Stomach (tissue), 19 donors: ENCODE measurements at regions of chr2 and their contacts with region 1.

Region 1: GRCh38 chr2:181466661-181467576 is 9.7 kb downstream of the ITGA4 start:
- DNase-seq: peak; percentile 77 to 79
- H3K4me3 ChIP-seq: no peak overlapping the region
- H3K27ac ChIP-seq: no peak overlapping the region
- H3K4me1 ChIP-seq: peaks cover 0 to 18% (median 0%) of the 10 kb centered on the region in 4 donors
- H3K27me3 ChIP-seq: no peaks in the 10 kb centered on the region
- CTCF ChIP-seq: peak in 5 of 7 experiments; percentile 14 to 78 (median 60)
- EP300 ChIP-seq: no peak
- POLR2A ChIP-seq: no peak

Region 2: GRCh38 chr2:180125245-180125962 is 1341.5 kb before region 1 on chr2:
- intact Hi-C with region 1: loop called (anchors 10 kb)
- DNase-seq: peak; percentile 66 to 93
- H3K4me3 ChIP-seq: no peak overlapping the region
- H3K27ac ChIP-seq: no peak overlapping the region
- H3K4me1 ChIP-seq: peaks cover 0 to 16% (median 6%) of the 10 kb centered on the region in 4 donors
- H3K27me3 ChIP-seq: no peaks in the 10 kb centered on the region
- CTCF ChIP-seq: peak in 4 of 7 experiments; percentile 27 to 63 (median 44)
- EP300 ChIP-seq: no peak
- POLR2A ChIP-seq: no peak

Region 3: GRCh38 chr2:181104512-181105115 is 362.3 kb before region 1 on chr2:
- intact Hi-C with region 1: loop called (anchors 10 kb)
- DNase-seq: peak in 1 of 2 donors; percentile 75
- H3K4me3 ChIP-seq: no peak overlapping the region
- H3K27ac ChIP-seq: no peak overlapping the region
- H3K4me1 ChIP-seq: peaks cover 0 to 5% (median 0%) of the 10 kb centered on the region in 4 donors
- H3K27me3 ChIP-seq: no peaks in the 10 kb centered on the region
- CTCF ChIP-seq: peak in 4 of 7 experiments; percentile 37 to 48 (median 46)
- EP300 ChIP-seq: no peak
- POLR2A ChIP-seq: no peak